Naive thymus-derived CD4-positive, alpha-beta T cell (primary cell): ENCODE measurements at regions of chr6 and their contacts with region 1.

Region 1: GRCh38 chr6:90202156-90202555 is 94.5 kb downstream of the BACH2 start:
- DNase-seq: no peak
- ATAC-seq: peak; percentile 45
- H3K4me3 ChIP-seq: no peak overlapping the region
- H3K4me3 Mint-ChIP-seq: peak overlapping the region; percentile 35 to 74 (median 53)
- H3K27ac ChIP-seq: peak overlapping the region; percentile 25
- H3K27ac Mint-ChIP-seq: peak overlapping the region; percentile 64 to 91 (median 79)
- H3K4me1 ChIP-seq: peaks cover 0 to 21% of the 10 kb centered on the region in 2 donors
- H3K4me1 Mint-ChIP-seq: peaks cover 24 to 92% (median 53%) of the 10 kb centered on the region in 7 donors
- H3K27me3 ChIP-seq: no peaks in the 10 kb centered on the region
- H3K27me3 Mint-ChIP-seq: no peaks in the 10 kb centered on the region

Region 2: GRCh38 chr6:89954721-89955149 is 247.4 kb before region 1 on chr6:
- CTCF ChIA-PET with region 1: no interaction called
- POLR2A ChIA-PET with region 1: no interaction called
- intact Hi-C with region 1: no loop called
- DNase-seq: peak in 7 of 9 donors; percentile 23 to 45 (median 37)
- ATAC-seq: peak; percentile 6
- H3K4me3 ChIP-seq: no peak overlapping the region
- H3K4me3 Mint-ChIP-seq: peak overlapping the region; percentile 16 to 78 (median 58)
- H3K27ac ChIP-seq: peak overlapping the region; percentile 44
- H3K27ac Mint-ChIP-seq: peak overlapping the region; percentile 70 to 93 (median 86)
- H3K4me1 ChIP-seq: peaks cover 40 to 49% of the 10 kb centered on the region in 2 donors
- H3K4me1 Mint-ChIP-seq: peaks cover 38 to 91% (median 81%) of the 10 kb centered on the region in 7 donors
- H3K27me3 ChIP-seq: no peaks in the 10 kb centered on the region
- H3K27me3 Mint-ChIP-seq: no peaks in the 10 kb centered on the region

Region 3: DNA sequence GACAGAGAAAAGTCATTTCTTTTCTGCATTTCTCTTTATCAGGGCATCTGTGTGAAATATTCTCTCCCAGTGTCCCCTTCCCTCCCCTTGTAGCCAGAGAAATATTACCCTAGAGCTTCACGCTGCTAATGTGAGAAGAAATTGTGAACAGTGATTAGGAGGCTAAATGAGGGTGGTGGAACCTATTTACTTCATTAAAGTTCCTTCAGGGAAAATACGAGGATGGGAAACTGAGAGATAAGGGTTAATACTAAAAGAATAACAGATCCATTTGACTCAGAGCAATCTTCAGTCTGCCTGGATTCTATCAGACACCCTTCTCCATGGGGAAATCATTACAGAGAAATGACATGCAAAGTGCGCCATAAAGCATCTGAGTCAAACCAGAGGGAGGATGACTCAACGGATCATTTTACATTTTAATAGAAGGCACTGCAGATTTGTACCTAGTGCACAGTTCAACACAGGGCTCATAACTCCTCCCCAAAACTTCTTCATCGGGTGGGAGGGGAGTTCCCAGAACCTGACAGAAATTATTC is 176.6 kb before region 1 on chr6:
- CTCF ChIA-PET with region 1: no interaction called
- POLR2A ChIA-PET with region 1: no interaction called
- intact Hi-C with region 1: no loop called
- DNase-seq: peak in 1 of 9 donors; percentile 48
- ATAC-seq: no peak
- H3K4me3 ChIP-seq: no peak overlapping the region
- H3K4me3 Mint-ChIP-seq: peak overlapping the region in 3 of 10 donors; percentile 18 to 30 (median 24)
- H3K27ac ChIP-seq: no peak overlapping the region
- H3K27ac Mint-ChIP-seq: peak overlapping the region in 8 of 9 donors; percentile 1 to 81 (median 50)
- H3K4me1 ChIP-seq: peaks cover 6 to 38% of the 10 kb centered on the region in 2 donors
- H3K4me1 Mint-ChIP-seq: peaks cover 38 to 99% (median 90%) of the 10 kb centered on the region in 7 donors
- H3K27me3 ChIP-seq: no peaks in the 10 kb centered on the region
- H3K27me3 Mint-ChIP-seq: no peaks in the 10 kb centered on the region

Region 4: GRCh38 chr6:90216072-90216977 is 14.2 kb after region 1 on chr6:
- CTCF ChIA-PET with region 1: interaction called, 7 read pairs
- POLR2A ChIA-PET with region 1: interaction called, 5 read pairs
- intact Hi-C with region 1: loop called in 1 of 2 experiments (anchors 1 kb)
- DNase-seq: peak in 5 of 9 donors; percentile 61 to 82 (median 63)
- ATAC-seq: peak; percentile 69
- H3K4me3 ChIP-seq: peak overlapping the region; percentile 18
- H3K4me3 Mint-ChIP-seq: peak overlapping the region in 7 of 10 donors; percentile 42 to 74 (median 68)
- H3K27ac ChIP-seq: peak overlapping the region; percentile 85
- H3K27ac Mint-ChIP-seq: no peak overlapping the region
- H3K4me1 ChIP-seq: peaks cover 0 to 97% of the 10 kb centered on the region in 2 donors
- H3K4me1 Mint-ChIP-seq: peaks cover 0 to 33% (median 31%) of the 10 kb centered on the region in 7 donors
- H3K27me3 ChIP-seq: no peaks in the 10 kb centered on the region
- H3K27me3 Mint-ChIP-seq: no peaks in the 10 kb centered on the region